ENCODE measurements at regions of chr15 and their contacts with region 1.

Region 1: DNA sequence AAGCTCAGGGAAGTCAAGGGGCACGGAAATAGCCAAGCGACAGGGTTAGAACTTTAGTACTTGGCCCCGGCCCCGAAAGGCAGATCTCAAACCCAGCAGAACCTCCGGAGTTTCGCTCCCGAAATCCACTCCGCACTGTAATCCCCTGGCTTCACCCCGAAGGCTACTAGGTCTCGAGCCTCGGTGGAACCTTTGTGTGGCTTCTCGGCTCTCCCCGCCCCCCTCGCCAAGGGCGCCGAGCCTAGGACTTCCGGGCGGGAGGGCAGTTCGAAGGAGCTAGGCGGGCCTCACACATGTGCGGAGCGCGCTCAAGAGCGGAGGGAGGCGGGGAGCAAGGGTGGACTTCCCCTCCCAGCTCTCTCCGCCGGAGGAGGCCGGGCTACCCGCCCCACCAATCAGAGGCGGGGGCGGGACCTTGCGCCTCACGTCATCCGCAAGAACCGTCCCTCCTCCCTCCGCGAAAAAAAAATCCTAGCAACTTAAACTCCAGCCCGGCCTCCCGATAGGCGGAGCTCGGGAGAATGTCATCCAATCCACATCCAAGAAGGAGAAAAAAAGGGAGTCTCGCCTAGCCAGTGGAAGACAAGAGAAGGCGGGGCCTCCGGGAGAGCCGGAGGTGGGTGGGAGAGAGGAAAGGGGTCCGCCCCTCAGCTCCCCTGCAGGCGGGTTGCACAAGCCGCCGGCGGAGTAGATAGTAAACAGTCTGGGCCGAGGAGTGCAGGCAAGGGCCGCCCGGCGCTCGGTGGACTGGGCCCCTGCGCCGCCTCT is 2.4 kb upstream of the SIN3A start:
- DNase-seq: peak; percentile 94 to 100 (median 98)

Region 2: GRCh38 chr15:75307778-75308391 is 146.0 kb before region 1 on chr15:
- intact Hi-C with region 1: no loop called
- DNase-seq: peak in 4 of 10 donors; percentile 15 to 79 (median 52)

Region 3: DNA sequence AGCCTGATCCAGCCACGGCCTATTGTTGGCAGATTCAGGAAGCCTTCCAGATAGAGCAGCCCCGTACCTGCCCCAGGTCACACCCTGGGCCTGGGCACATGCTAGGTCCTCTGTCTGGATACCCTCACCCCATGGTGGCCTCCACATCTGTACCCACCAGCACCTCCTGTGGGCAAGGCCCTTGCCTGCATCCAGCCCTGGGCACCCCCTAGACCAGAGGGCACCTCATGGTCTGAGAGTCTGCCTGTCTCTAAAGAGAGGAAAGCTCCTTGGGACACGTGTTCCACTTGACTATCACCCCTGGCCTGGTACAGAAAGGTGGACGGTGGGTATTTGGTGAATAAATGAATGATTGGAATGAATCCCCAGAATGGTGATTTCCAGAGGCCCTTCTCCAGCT is 126.9 kb before region 1 on chr15:
- intact Hi-C with region 1: no loop called
- DNase-seq: peak in 2 of 10 donors; percentile 59 to 70

Region 4: GRCh38 chr15:75367913-75368688 is 85.8 kb before region 1 on chr15 and contains the start of gene MAN2C1:
- intact Hi-C with region 1: loop called (anchors 5 kb)
- DNase-seq: peak; percentile 80 to 99 (median 93)

Region 5: DNA sequence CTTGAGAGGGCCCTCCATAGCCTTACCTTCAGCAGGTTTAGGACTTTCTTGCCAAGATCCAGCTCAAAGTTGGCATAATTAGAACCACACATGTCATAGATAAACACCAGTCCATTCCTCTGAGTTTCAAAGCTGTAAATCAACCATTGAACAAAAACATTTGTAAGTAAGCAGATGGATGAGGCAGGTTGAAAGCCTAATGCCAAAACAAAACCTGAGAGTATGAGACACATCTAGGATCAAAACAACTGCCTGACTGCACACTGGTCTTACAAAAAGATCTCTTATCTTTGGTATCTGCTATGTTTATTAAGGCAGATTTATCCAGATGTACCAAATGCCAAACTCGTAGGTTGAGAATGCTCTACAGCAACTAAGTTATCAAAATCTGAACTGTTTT is 63.3 kb after region 1 on chr15:
- intact Hi-C with region 1: no loop called
- DNase-seq: no peak

Region 6: GRCh38 chr15:75578948-75579920 is 125.3 kb after region 1 on chr15 and contains the start of gene PTPN9:
- intact Hi-C with region 1: loop called (anchors 2 kb)
- DNase-seq: peak; percentile 62 to 96 (median 78)

Region 7: DNA sequence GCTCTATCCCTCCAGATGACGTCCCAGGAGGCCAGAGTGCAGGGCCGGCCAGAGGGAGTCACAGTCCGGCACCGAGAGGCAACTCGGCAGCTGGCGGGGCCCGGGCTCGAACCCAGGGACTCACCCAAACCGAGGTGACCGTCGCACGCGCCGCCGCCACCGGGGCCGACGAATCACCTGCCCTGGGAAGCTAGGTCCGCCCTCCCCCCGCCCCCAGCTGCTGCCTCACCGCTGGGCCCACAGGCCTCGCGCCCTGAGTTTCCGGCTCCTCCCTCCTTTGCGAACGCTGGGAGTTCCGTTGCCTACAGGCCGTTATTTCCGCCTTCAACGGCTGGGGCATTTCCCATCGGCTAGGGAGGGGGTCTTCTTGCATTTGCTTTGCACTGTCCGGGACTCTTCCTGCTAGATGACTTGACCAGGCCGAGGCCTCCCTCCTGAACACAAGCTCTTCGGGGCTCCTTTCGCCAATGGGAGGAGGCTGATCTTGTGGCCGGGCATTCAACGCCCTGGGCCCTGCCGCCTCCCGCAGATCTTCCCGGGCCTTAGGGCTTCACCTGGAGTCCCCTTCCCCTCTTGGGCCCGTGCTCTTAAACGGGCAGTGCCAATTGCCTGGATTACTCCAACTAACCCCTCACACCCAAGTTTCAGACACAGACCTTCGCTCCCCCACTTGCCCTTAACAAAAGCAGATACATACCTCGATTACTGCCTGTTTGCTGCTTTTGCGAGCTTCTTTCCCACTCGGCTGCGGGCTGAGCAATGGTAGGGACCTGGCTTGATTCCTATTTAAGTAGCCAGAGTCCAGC is 171.9 kb after region 1 on chr15 and contains the start of gene SNUPN:
- intact Hi-C with region 1: loop called (anchors 5 kb)
- DNase-seq: peak; percentile 87 to 99 (median 91)

Measured in posterior cingulate gyrus (tissue), 11 donors.